A673 (cell line): ENCODE measurements at regions of chr18 and their contacts with region 1.

Region 1: GRCh38 chr18:70072678-70073077 is 125.0 kb upstream of the CD226 start:
- DNase-seq: peak; percentile 19
- H3K4me3 ChIP-seq: no peak overlapping the region
- H3K27ac ChIP-seq: no peak overlapping the region
- H3K4me1 ChIP-seq: no peaks in the 10 kb centered on the region
- H3K27me3 ChIP-seq: no peaks in the 10 kb centered on the region
- CTCF ChIP-seq: peak; percentile 39; the same call in 1 of the 2 replicates

Region 2: DNA sequence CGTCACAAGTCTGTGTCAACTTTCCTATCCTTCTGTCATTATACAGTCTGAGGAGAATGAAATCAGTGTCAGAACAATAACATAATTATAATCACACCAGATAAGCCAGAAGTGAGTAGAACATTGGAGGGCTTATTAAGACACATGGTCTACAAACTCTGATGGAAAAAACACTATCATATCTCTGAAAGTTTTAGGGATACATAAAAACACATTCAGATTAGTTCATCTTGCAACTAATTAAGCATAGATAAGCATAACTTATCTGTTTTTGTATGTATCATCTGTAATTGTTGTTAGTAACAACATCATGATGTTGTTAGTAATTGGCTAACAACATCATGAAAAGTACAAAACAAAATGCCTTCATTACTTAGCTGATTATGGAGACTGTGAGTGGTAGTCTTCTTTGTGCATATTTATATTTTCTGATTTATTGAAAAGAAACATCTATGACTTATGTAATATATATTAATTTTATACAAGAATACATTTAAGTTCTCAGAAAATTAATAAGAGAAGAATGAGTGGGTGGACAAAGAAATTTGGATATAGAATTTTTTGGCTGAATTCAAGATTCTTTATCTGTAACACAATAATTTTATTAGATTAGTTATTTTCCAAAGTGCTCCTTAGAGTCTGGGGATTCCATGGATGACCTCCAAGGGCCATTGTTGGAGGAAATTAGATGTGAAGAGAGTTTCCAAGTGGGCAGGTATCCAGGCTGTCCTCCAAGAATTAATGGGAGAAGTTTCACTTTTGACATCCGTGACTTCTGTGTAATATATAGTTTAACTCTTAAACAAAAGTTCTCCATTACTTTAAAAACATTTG is 1291.7 kb before region 1 on chr18:
- CTCF ChIA-PET with region 1: no interaction called
- POLR2A ChIA-PET with region 1: no interaction called
- intact Hi-C with region 1: no loop called
- DNase-seq: no peak
- H3K4me3 ChIP-seq: no peak overlapping the region
- H3K27ac ChIP-seq: no peak overlapping the region
- H3K4me1 ChIP-seq: peaks cover 7% of the 10 kb centered on the region
- H3K27me3 ChIP-seq: no peaks in the 10 kb centered on the region
- CTCF ChIP-seq: no peak

Region 3: DNA sequence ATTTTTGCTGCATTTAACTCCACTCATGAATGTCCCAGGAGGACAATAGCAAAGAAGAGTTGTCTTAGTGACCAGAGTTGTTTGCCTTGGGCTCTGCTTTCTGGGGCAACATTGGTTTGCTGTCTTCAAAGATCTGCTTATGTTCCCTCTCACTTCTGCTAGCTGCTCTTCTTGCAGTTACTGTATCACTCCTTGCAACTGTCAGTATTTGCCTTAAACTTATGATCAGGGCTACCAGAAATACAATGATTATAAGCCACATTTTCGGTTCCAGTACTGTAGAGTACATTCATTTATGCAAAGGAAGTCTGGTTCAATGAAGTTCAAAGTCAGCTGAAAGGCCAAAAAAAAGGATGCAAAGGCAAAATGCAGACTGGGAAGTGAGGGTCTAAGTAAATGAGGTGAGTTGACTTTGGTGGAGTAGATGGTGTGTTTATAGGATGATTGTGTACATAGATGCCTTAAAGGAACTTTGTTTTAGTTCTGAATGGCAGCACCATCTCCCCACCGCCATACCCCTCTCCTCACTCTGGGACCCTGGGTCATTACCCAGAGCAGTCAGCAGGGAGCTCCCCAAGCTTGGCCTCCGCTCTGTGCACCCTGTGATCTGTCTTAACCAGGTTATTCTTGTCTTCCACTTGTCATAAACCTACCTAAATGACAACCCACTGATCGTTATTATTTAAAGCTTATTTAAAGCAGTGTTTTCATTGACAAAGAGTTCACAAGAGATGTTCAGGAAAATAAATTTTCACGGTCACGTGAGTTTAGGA is 436.0 kb before region 1 on chr18:
- CTCF ChIA-PET with region 1: no interaction called
- POLR2A ChIA-PET with region 1: no interaction called
- intact Hi-C with region 1: loop called (anchors 5 kb)
- DNase-seq: peak; percentile 40
- H3K4me3 ChIP-seq: no peak overlapping the region
- H3K27ac ChIP-seq: no peak overlapping the region
- H3K4me1 ChIP-seq: no peaks in the 10 kb centered on the region
- H3K27me3 ChIP-seq: no peaks in the 10 kb centered on the region
- CTCF ChIP-seq: peak; percentile 54

Region 4: DNA sequence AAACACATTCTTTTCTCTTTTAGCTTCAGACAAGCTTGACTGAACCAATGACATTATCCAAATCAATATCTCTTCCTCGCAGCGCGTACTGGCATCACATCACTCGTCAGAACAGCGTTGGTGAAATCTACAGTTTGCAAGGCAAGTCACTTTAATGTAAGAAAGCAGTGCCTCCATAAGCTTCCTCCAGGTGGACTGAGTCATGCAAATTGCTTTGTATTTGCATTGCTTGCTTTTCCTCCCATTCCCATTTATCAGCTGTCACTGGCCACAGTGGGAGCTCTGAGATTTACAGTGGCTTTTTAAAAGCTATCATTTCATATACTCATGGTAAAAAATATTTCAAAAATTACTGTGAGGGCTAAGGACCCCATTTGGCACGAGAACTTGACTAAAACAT is 314.9 kb before region 1 on chr18:
- CTCF ChIA-PET with region 1: no interaction called
- POLR2A ChIA-PET with region 1: no interaction called
- intact Hi-C with region 1: loop called (anchors 10 kb)
- DNase-seq: peak; percentile 25
- H3K4me3 ChIP-seq: no peak overlapping the region
- H3K27ac ChIP-seq: no peak overlapping the region
- H3K4me1 ChIP-seq: peaks cover 8% of the 10 kb centered on the region
- H3K27me3 ChIP-seq: no peaks in the 10 kb centered on the region
- CTCF ChIP-seq: no peak

Region 5: DNA sequence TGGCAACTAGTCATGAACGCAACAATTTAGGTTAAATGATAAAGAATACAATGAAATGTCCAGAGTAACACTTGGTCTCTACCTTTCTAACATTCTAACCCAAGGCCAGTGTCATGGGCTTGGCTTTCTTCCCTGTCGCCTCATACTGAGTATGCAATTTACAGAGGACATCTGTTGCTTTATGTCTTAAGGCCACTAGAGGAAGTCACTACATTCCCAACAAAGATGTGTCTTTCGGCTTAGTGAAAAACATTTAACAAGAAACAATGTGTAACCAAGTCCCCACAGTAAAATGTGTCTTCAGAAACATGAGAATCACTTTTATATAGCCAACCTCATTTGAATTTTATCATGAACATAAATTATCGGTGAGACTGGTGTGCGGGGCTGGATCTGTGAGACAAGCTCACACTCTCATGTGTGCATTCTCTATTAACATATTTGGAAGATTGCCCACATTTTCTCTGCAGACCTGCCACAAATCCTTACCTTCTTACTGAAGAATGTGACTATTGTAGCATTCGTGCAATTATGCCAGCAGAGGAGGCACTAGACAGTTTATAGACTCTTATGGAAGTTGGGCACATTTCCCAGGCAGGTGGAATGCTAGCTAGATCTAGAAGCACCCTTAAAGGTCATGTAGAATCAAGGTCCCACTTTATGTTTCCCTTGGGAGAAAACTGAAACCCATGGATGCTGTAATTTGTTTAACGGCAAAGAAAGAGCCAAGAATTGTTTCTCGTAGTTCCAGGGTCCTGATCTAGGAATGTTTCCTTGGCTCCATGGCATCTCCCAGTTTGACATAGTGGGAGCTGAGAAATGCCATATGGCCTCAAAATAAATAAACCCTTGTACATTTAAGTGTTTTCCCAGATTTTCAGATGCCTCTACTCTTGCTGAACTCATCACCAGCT is 226.8 kb before region 1 on chr18:
- CTCF ChIA-PET with region 1: no interaction called
- POLR2A ChIA-PET with region 1: no interaction called
- intact Hi-C with region 1: loop called (anchors 5 kb)
- DNase-seq: peak; percentile 62
- H3K4me3 ChIP-seq: no peak overlapping the region
- H3K27ac ChIP-seq: no peak overlapping the region
- H3K4me1 ChIP-seq: peaks cover 15% of the 10 kb centered on the region
- H3K27me3 ChIP-seq: no peaks in the 10 kb centered on the region
- CTCF ChIP-seq: peak; percentile 47; the same call in 1 of the 2 replicates